Naive thymus-derived CD4-positive, alpha-beta T cell (primary cell): ENCODE measurements at regions of chr9 and their contacts with region 1.

Region 1: GRCh38 chr9:26148128-26148527 is 469.9 kb upstream of the TUSC1 start:
- DNase-seq: no peak
- ATAC-seq: no peak
- H3K4me3 ChIP-seq: no peak overlapping the region
- H3K4me3 Mint-ChIP-seq: no peak overlapping the region
- H3K27ac ChIP-seq: no peak overlapping the region
- H3K27ac Mint-ChIP-seq: no peak overlapping the region
- H3K4me1 ChIP-seq: no peaks in the 10 kb centered on the region
- H3K4me1 Mint-ChIP-seq: no peaks in the 10 kb centered on the region
- H3K27me3 ChIP-seq: no peaks in the 10 kb centered on the region
- H3K27me3 Mint-ChIP-seq: no peaks in the 10 kb centered on the region

Region 2: DNA sequence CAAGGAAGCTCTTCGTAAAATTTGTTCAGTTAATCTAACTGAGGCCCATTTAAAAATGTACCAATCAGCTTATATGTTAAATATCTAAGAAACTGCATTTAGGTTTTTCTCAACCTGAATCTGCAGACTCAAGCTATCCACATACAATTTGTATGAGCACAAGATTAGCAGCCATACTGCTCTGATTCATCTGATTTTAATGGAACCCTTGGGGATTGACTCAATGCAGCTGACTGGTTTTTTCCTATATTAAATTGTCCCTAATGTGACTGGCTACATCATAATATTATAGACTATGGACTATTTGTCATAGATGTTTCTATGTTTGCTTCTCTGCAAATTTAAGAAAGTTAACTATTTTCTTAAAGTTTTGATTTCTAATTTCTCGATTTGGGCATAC is 18.9 kb before region 1 on chr9:
- CTCF ChIA-PET with region 1: no interaction called
- POLR2A ChIA-PET with region 1: no interaction called
- intact Hi-C with region 1: loop called in 1 of 2 experiments (anchors 2 kb)
- DNase-seq: no peak
- ATAC-seq: no peak
- H3K4me3 ChIP-seq: no peak overlapping the region
- H3K4me3 Mint-ChIP-seq: no peak overlapping the region
- H3K27ac ChIP-seq: no peak overlapping the region
- H3K27ac Mint-ChIP-seq: no peak overlapping the region
- H3K4me1 ChIP-seq: no peaks in the 10 kb centered on the region
- H3K4me1 Mint-ChIP-seq: no peaks in the 10 kb centered on the region
- H3K27me3 ChIP-seq: no peaks in the 10 kb centered on the region
- H3K27me3 Mint-ChIP-seq: no peaks in the 10 kb centered on the region

Region 3: GRCh38 chr9:27227192-27227591 is 1079.1 kb after region 1 on chr9:
- CTCF ChIA-PET with region 1: no interaction called
- POLR2A ChIA-PET with region 1: no interaction called
- intact Hi-C with region 1: no loop called
- DNase-seq: no peak
- ATAC-seq: no peak
- H3K4me3 ChIP-seq: no peak overlapping the region
- H3K4me3 Mint-ChIP-seq: no peak overlapping the region
- H3K27ac ChIP-seq: no peak overlapping the region
- H3K27ac Mint-ChIP-seq: no peak overlapping the region
- H3K4me1 ChIP-seq: no peaks in the 10 kb centered on the region
- H3K4me1 Mint-ChIP-seq: no peaks in the 10 kb centered on the region
- H3K27me3 ChIP-seq: no peaks in the 10 kb centered on the region
- H3K27me3 Mint-ChIP-seq: peaks cover 0 to 6% (median 0%) of the 10 kb centered on the region in 5 donors